ENCODE measurements at regions of chr15 and their contacts with region 1.

Region 1: DNA sequence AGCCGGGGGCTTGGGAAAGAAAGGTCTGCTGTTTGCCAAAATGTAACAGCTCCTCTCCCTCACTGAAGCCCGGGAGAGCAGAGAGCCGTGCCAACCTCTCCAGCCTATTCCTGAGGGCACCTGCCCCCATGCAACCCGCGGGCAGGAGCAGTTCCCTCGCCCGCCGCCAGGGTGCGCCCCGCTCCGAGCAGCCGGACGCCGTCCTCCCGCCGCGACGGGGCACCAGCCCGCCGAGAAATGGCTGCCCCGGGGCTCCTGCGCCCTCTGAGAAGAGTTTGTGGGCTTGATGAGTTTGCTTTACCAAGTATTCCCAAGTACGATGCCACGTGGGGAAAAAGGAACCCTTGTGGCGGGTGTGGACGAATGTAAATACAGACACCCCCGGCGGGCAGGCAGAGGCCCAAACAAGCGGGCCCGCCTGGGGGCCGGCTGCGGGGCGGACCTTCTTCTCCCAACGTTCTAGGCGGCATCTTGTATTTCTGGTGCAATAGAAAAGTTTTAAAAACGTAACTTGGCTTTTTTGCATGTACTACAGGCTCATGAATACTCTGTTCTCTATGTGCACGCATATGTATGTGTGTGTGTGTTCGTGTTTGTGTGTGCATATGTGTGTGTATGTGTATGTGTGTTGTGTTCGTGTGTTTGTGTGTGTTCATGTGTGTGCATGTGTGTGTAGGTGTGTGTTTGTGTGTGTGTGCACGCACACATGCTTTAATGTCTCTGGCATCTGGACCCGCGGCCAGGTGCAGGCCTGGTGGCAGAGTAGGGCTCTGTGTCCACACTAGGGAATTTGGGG is 162.9 kb downstream of the CHSY1 start:
- DNase-seq: peak; percentile 47
- H3K4me3 ChIP-seq: no peak overlapping the region
- H3K27ac ChIP-seq: no peak overlapping the region
- H3K4me1 ChIP-seq: peaks cover 17% of the 10 kb centered on the region
- H3K27me3 ChIP-seq: no peaks in the 10 kb centered on the region
- CTCF ChIP-seq: peak; percentile 90 to 98
- POLR2A ChIP-seq: no peak

Region 2: DNA sequence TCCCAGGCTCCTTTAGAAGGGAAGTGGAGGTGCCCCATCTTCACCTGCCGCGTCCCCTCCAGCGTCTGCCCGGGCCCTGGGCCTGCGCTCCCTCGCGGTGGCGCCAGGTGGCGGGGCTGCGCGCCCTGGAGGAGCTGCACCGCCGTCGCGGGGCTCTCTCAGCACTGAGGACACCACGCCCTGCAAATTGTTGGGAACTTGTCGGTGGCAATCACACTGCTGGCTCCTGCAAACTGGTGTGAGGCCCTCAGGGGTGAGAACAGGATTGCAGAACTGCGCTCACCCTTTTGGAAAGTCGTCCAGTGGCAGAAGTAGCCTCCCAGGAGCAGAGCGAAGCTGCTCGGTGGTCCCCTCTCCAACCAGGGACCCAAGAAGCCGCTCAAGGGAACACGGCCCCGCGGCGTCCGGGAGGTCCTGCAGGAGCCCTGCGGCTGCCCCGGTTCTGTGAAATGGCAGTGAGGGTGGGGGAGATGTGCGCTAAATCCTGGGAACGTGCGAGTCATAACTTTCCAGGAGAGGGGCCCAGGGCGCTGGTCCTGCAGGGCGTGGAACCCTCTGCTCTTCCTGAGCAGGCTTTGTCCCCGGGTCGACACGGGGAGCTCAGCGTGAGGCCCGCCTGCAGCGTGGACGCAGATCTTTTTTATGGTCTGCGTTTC is 170.8 kb before region 1 on chr15:
- CTCF ChIA-PET with region 1: no interaction called
- POLR2A ChIA-PET with region 1: no interaction called
- dilution Hi-C with region 1: no loop called
- intact Hi-C with region 1: no loop called
- DNase-seq: peak; percentile 78
- H3K4me3 ChIP-seq: peak overlapping the region; percentile 50 to 60 (median 58)
- H3K27ac ChIP-seq: peak overlapping the region; percentile 44
- H3K4me1 ChIP-seq: peaks cover 14% of the 10 kb centered on the region
- H3K27me3 ChIP-seq: no peaks in the 10 kb centered on the region
- CTCF ChIP-seq: peak; percentile 90 to 94
- POLR2A ChIP-seq: no peak

Region 3: DNA sequence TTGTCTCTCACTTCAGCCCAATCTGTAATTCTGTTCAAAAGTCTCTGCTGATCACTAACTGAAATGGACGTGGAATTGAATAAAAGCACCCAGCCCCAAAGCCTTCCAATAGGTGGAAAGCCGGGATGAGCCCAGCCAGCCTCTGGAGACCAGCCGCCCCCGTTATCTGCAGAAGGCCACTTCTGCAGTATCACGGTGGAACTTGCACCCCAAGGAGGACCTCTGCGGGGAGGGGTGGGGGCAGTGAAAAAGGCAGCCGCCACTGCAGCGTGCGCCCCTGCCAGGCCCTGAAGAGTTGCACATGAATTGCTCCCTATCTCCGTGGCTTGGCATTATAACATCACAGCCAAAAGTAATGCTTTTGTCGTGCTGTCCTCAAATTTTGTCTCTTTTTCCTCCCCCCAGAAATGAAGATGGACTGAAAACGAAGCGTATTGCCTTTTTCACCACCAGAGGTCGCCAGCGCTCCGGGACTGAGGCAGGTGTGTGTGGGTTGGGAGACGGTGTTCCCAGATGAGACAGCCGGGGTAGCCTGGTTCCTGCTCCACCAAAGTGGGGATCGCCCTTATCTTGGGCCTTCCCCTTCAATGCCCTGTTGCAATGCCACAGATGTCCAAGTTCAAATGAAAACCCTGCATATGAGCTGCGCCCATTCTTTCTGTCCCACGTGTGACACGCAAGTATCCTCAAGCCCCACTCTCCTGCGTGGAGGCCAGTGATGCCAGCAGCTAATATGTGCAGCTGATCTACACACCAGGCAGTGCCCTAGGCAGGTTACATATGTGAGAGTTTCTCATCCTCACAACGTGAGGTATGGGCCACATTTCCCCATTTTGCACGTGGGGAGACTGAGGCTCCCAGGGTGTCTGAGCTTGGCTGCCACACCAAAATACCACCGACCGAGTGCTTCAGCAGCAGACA is 73.8 kb before region 1 on chr15:
- CTCF ChIA-PET with region 1: interaction called, 5 read pairs
- POLR2A ChIA-PET with region 1: no interaction called
- dilution Hi-C with region 1: no loop called
- intact Hi-C with region 1: loop called (anchors 1 kb)
- DNase-seq: peak; percentile 59
- H3K4me3 ChIP-seq: no peak overlapping the region
- H3K27ac ChIP-seq: no peak overlapping the region
- H3K4me1 ChIP-seq: no peaks in the 10 kb centered on the region
- H3K27me3 ChIP-seq: no peaks in the 10 kb centered on the region
- CTCF ChIP-seq: peak; percentile 83 to 90
- POLR2A ChIP-seq: no peak

Region 4: GRCh38 chr15:101070502-101071273 is 18.3 kb before region 1 on chr15:
- CTCF ChIA-PET with region 1: interaction called, 3 read pairs
- POLR2A ChIA-PET with region 1: no interaction called
- dilution Hi-C with region 1: no loop called
- intact Hi-C with region 1: loop called (anchors 1 kb)
- DNase-seq: peak; percentile 87
- H3K4me3 ChIP-seq: no peak overlapping the region
- H3K27ac ChIP-seq: peak overlapping the region; percentile 71
- H3K4me1 ChIP-seq: peaks cover 10% of the 10 kb centered on the region
- H3K27me3 ChIP-seq: no peaks in the 10 kb centered on the region
- CTCF ChIP-seq: no peak
- POLR2A ChIP-seq: no peak

Region 5: GRCh38 chr15:101121511-101122090 is 32.6 kb after region 1 on chr15:
- CTCF ChIA-PET with region 1: interaction called, 5 read pairs
- POLR2A ChIA-PET with region 1: no interaction called
- dilution Hi-C with region 1: no loop called
- intact Hi-C with region 1: loop called (anchors 2 kb)
- DNase-seq: peak; percentile 78
- H3K4me3 ChIP-seq: no peak overlapping the region
- H3K27ac ChIP-seq: no peak overlapping the region
- H3K4me1 ChIP-seq: peaks cover 3% of the 10 kb centered on the region
- H3K27me3 ChIP-seq: no peaks in the 10 kb centered on the region
- CTCF ChIP-seq: peak; percentile 28 to 66
- POLR2A ChIP-seq: no peak

Region 6: GRCh38 chr15:101167753-101168463 is 78.9 kb after region 1 on chr15:
- CTCF ChIA-PET with region 1: interaction called, 8 read pairs
- POLR2A ChIA-PET with region 1: no interaction called
- dilution Hi-C with region 1: no loop called
- intact Hi-C with region 1: loop called (anchors 1 kb)
- DNase-seq: peak; percentile 95
- H3K4me3 ChIP-seq: peak overlapping the region in 1 of 3 experiments; percentile 19
- H3K27ac ChIP-seq: peak overlapping the region; percentile 98
- H3K4me1 ChIP-seq: peaks cover 37% of the 10 kb centered on the region
- H3K27me3 ChIP-seq: no peaks in the 10 kb centered on the region
- CTCF ChIP-seq: no peak
- POLR2A ChIP-seq: no peak

Region 7: GRCh38 chr15:101176625-101177024 is 87.6 kb after region 1 on chr15:
- CTCF ChIA-PET with region 1: interaction called, 4 read pairs
- POLR2A ChIA-PET with region 1: no interaction called
- dilution Hi-C with region 1: no loop called
- intact Hi-C with region 1: loop called (anchors 1 kb)
- DNase-seq: peak; percentile 79
- H3K4me3 ChIP-seq: no peak overlapping the region
- H3K27ac ChIP-seq: peak overlapping the region; percentile 68
- H3K4me1 ChIP-seq: peaks cover 27% of the 10 kb centered on the region
- H3K27me3 ChIP-seq: no peaks in the 10 kb centered on the region
- CTCF ChIP-seq: no peak
- POLR2A ChIP-seq: no peak

Region 8: DNA sequence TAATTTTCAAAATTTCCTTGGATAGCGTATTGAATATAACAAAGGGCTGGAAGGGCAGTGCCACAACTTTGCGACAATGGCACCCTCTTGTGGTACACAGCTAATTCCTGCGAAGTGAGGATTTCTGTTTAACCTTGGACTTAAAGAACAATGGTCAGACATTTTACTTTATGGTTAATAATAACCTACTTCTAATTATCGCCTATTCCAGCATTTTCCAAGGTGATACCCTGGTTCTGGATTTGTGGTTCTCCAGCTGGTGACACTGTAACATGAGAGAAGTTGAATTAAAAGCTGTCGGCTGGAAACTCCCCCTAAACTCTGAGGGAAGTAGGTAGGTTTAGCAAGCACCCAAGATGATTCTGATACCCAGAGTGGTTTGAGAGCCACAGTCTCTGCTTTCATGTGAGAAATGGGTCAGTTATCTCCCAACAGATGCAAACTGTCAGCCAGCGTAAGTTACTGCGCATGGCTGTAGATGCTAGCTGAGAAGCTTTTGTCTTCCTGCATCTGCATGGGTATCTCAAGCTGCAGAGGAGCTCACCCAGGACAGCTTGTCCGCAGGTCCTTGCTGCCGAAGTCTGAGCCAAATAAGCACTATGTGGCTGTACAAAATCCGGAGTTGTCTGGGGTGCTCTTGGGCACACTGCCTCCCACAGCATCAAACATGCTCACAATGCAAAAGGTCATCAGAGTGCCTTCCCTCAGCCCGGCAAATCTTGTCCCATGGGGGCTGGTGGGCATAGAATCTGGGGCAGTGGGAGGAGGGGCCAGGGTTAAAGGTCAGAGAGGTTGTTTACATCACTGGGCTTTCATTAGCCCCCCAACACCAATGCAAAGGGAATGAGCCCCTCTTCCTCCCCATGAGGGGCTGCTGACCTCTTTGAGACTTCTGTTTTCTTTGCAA is 169.5 kb after region 1 on chr15:
- CTCF ChIA-PET with region 1: interaction called, 33 read pairs
- POLR2A ChIA-PET with region 1: no interaction called
- dilution Hi-C with region 1: no loop called
- intact Hi-C with region 1: loop called (anchors 1 kb)
- DNase-seq: peak; percentile 80
- H3K4me3 ChIP-seq: no peak overlapping the region
- H3K27ac ChIP-seq: no peak overlapping the region
- H3K4me1 ChIP-seq: peaks cover 11% of the 10 kb centered on the region
- H3K27me3 ChIP-seq: peaks cover 0 to 2% of the 10 kb centered on the region in 2 experiments
- CTCF ChIP-seq: peak; percentile 66 to 88
- POLR2A ChIP-seq: no peak